ENCODE measurements at regions of chr14 and their contacts with region 1.

Region 1: GRCh38 chr14:51035611-51036213 is 59.2 kb downstream of the TRIM9 start:
- DNase-seq: no peak

Region 2: GRCh38 chr14:51008446-51008845 is 27.3 kb before region 1 on chr14:
- intact Hi-C with region 1: loop called in 1 of 2 experiments (anchors 1 kb)
- DNase-seq: no peak

Measured in posterior vena cava (tissue), 2 donors.